GM12878 (cell line): ENCODE measurements at regions of chr15 and their contacts with region 1.

Region 1: DNA sequence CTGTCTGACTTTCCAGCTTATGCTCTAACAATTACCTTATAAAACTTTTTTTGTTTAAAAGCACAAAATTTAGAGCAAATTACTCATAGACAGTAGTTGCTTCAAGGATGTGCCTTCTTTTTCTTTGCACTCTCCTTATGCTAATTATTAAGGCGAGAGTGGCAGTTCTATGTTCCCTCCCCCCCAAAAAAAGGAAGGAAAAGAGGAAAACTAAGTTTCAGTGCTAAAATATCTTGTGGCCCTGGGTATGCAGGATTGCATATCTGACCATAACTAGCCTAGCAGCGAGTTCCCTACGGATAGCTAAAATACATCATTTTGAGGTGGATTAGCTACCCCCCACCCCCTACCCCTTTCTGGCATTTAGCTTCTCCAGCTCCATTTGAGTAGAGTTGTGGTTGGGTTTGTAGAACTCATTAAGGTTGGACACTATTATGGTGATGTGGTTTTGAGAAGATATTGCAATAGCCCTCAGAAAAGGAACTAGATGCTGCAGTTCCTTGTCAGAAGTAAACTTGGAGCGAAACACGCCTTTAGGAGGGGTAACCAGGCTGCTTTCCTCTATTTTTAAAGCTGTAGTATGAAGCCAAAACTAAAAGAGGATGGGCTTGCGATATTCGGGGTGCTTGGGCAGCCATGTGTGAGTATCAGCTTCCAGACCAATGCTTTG is 174.6 kb downstream of the AKAP13 start:
- DNase-seq: no peak
- ATAC-seq: peak; percentile 79
- H3K4me3 ChIP-seq: peak overlapping the region; percentile 22; the same call in 1 of the 2 replicates
- H3K27ac ChIP-seq: peak overlapping the region; percentile 23
- H3K4me1 ChIP-seq: peaks cover 25% of the 10 kb centered on the region
- H3K27me3 ChIP-seq: no peaks in the 10 kb centered on the region
- CTCF ChIP-seq: no peak
- EP300 ChIP-seq: no peak
- POLR2A ChIP-seq: no peak
- RAD21 ChIP-seq: no peak

Region 2: GRCh38 chr15:85541744-85542143 is 13.2 kb before region 1 on chr15:
- CTCF ChIA-PET with region 1: interaction called, 9 read pairs
- POLR2A ChIA-PET with region 1: interaction called, 3 read pairs
- RAD21 ChIA-PET with region 1: interaction called, 3 read pairs
- SMC1A ChIA-PET with region 1: interaction called, 12 read pairs
- in situ Hi-C with region 1: no loop called
- intact Hi-C with region 1: no loop called
- DNase-seq: no peak
- ATAC-seq: peak; percentile 71
- H3K4me3 ChIP-seq: no peak overlapping the region
- H3K27ac ChIP-seq: no peak overlapping the region
- H3K4me1 ChIP-seq: peaks cover 37% of the 10 kb centered on the region
- H3K27me3 ChIP-seq: no peaks in the 10 kb centered on the region
- CTCF ChIP-seq: no peak
- EP300 ChIP-seq: no peak
- POLR2A ChIP-seq: no peak
- RAD21 ChIP-seq: no peak

Region 3: DNA sequence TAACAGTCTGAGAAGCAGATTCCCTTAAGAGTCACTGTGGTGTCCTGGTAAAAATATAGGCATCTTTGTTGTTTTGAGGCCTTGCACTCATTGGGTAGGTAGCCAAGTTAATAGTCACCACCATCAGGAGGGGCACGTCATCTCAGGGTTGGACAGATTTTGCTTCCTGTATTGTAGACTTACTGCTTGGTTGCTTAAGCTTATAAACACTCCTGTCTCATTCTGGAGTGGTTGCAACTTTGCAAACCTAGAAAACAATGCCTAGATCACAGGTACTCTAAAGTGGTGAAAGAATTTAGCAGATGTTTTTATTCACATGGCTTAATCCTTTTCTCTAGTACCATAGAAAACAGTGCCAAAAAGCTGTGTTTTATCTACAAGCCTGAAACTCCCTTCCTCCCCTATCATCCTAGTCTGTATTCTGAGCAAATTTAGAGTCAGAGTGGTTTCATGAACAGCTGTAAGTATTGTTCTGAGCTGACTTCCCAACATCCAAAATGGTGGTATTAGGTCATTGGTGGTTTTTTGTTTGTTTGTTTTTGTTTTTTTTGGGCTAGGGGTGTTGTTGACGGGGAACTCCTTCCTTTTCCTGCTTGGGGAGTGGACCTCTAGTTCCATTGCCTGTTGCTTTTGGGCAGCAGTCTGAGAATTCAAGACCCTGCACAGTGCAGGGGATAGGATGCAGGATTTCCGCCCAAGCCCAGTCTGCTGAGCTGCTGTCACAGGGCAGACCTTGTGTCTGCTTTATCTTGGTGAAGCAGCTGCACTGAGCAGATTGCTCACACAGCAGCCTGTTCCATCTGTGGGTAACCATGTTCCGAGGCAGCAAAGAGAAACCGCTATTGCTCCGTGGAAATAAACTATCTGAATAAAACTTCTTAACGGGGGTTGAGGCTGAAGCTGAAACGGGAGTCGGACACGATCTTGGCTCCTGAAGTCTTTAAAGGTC is 27.4 kb after region 1 on chr15:
- CTCF ChIA-PET with region 1: interaction called, 3 read pairs
- POLR2A ChIA-PET with region 1: interaction called, 5 read pairs
- RAD21 ChIA-PET with region 1: interaction called, 4 read pairs
- SMC1A ChIA-PET with region 1: interaction called, 11 read pairs
- in situ Hi-C with region 1: no loop called
- intact Hi-C with region 1: no loop called
- DNase-seq: peak; percentile 34
- ATAC-seq: peak; percentile 51
- H3K4me3 ChIP-seq: peak overlapping the region; percentile 63
- H3K27ac ChIP-seq: peak overlapping the region; percentile 82
- H3K4me1 ChIP-seq: peaks cover 63% of the 10 kb centered on the region
- H3K27me3 ChIP-seq: no peaks in the 10 kb centered on the region
- CTCF ChIP-seq: no peak
- EP300 ChIP-seq: no peak
- POLR2A ChIP-seq: peak; percentile 81
- RAD21 ChIP-seq: no peak

Region 4: GRCh38 chr15:85920956-85921355 is 366.0 kb after region 1 on chr15:
- CTCF ChIA-PET with region 1: no interaction called
- POLR2A ChIA-PET with region 1: no interaction called
- RAD21 ChIA-PET with region 1: no interaction called
- SMC1A ChIA-PET with region 1: no interaction called
- in situ Hi-C with region 1: no loop called
- intact Hi-C with region 1: no loop called
- DNase-seq: no peak
- ATAC-seq: no peak
- H3K4me3 ChIP-seq: no peak overlapping the region
- H3K27ac ChIP-seq: no peak overlapping the region
- H3K4me1 ChIP-seq: peaks cover 7% of the 10 kb centered on the region; the same call in 1 of the 2 replicates
- H3K27me3 ChIP-seq: no peaks in the 10 kb centered on the region; a peak in 1 of 4 replicates
- CTCF ChIP-seq: no peak
- EP300 ChIP-seq: no peak
- POLR2A ChIP-seq: no peak
- RAD21 ChIP-seq: no peak